ENCODE measurements at regions of chr16 and their contacts with region 1.

Region 1: GRCh38 chr16:75555707-75556430 is at the start of gene TMEM231:
- DNase-seq: peak; percentile 99
- H3K4me3 ChIP-seq: peak within 1 kb of the TSS; percentile 45 to 77 (median 68)
- H3K27ac ChIP-seq: peak within 1 kb of the TSS; percentile 81 to 86 (median 83)
- H3K4me1 ChIP-seq: peaks cover 0 to 12% (median 9%) of the 10 kb centered on the region in 4 donors
- H3K27me3 ChIP-seq: no peaks in the 10 kb centered on the region
- CTCF ChIP-seq: no peak
- EP300 ChIP-seq: no peak
- POLR2A ChIP-seq: no peak
- total RNA-seq, gene TMEM231: 3.5 to 8.8 (median 5.9) TPM

Region 2: GRCh38 chr16:75432828-75433731 is 122.8 kb before region 1 on chr16 and contains the start of gene CFDP1:
- intact Hi-C with region 1: loop called (anchors 5 kb)
- DNase-seq: peak; percentile 98
- H3K4me3 ChIP-seq: peak within 1 kb of the TSS; percentile 75 to 92 (median 84)
- H3K27ac ChIP-seq: peak within 1 kb of the TSS; percentile 95 to 98 (median 96)
- H3K4me1 ChIP-seq: peaks cover 0 to 17% (median 11%) of the 10 kb centered on the region in 4 donors
- H3K27me3 ChIP-seq: no peaks in the 10 kb centered on the region
- CTCF ChIP-seq: no peak
- EP300 ChIP-seq: no peak
- POLR2A ChIP-seq: peak; percentile 55 to 64
- total RNA-seq, gene CFDP1: 42.1 to 61.1 (median 48.2) TPM

Region 3: GRCh38 chr16:75579281-75579834 is 23.5 kb after region 1 on chr16:
- intact Hi-C with region 1: loop called (anchors 1 kb)
- DNase-seq: no peak
- H3K4me3 ChIP-seq: no peak overlapping the region
- H3K27ac ChIP-seq: no peak overlapping the region
- H3K4me1 ChIP-seq: peaks cover 0 to 12% (median 3%) of the 10 kb centered on the region in 4 donors
- H3K27me3 ChIP-seq: no peaks in the 10 kb centered on the region
- CTCF ChIP-seq: no peak
- EP300 ChIP-seq: no peak
- POLR2A ChIP-seq: no peak

Region 4: DNA sequence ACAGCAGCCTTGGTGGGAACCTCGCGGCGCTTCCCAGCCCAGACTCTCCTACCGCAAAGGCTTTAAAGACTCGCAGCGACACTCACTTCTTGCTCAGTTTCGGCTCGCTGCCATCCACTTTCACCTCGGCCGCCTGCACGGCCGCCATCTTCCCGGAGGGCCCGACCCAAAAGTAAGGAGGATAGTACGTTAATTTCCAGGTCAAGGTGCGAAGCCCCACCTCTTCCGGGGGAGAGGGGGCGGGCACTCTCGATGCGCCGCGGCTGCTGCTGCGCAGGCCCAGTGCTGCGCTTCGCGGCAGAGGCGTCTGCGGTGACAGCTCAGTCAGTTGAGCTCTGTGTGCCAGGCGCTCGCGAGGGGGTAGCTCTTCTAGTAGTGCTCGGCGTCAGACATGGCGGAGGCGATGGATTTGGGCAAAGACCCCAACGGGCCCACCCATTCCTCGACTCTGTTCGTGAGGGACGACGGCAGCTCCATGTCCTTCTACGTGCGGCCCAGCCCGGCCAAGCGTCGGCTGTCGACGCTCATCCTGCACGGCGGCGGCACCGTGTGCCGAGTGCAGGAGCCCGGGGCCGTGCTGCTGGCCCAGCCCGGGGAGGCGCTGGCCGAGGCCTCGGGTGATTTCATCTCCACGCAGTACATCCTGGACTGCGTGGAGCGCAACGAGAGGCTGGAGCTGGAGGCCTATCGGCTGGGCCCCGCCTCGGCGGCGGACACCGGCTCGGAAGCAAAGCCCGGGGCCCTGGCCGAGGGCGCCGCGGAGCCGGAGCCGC is 91.8 kb after region 1 on chr16 and contains the starts of genes KARS1 and TERF2IP:
- intact Hi-C with region 1: loop called (anchors 5 kb)
- DNase-seq: peak; percentile 96
- H3K4me3 ChIP-seq: peak within 1 kb of the TSS; percentile 92 to 98 (median 94)
- H3K27ac ChIP-seq: peak within 1 kb of the TSS; percentile 96 to 100 (median 97)
- H3K4me1 ChIP-seq: peaks cover 0 to 58% (median 52%) of the 10 kb centered on the region in 4 donors
- H3K27me3 ChIP-seq: no peaks in the 10 kb centered on the region
- CTCF ChIP-seq: no peak
- EP300 ChIP-seq: no peak
- POLR2A ChIP-seq: peak; percentile 95 to 98
- total RNA-seq, gene KARS1: 98.3 to 113 (median 111) TPM
- total RNA-seq, gene TERF2IP: 49.0 to 76.0 (median 65.5) TPM

Measured in sigmoid colon (tissue), 7 donors.